Activated naive CD4-positive, alpha-beta T cell treated with anti-CD3 and anti-CD28 coated beads for 36 hours (primary cell): ENCODE measurements at regions of chr7 and their contacts with region 1.

Region 1: GRCh38 chr7:135281363-135281949 is 47.8 kb downstream of the STRA8 start:
- DNase-seq: peak; percentile 93
- H3K4me3 Mint-ChIP-seq: no peak overlapping the region
- H3K27ac Mint-ChIP-seq: no peak overlapping the region
- H3K4me1 Mint-ChIP-seq: peaks cover 6% of the 10 kb centered on the region
- H3K27me3 Mint-ChIP-seq: peaks cover 5% of the 10 kb centered on the region

Region 2: DNA sequence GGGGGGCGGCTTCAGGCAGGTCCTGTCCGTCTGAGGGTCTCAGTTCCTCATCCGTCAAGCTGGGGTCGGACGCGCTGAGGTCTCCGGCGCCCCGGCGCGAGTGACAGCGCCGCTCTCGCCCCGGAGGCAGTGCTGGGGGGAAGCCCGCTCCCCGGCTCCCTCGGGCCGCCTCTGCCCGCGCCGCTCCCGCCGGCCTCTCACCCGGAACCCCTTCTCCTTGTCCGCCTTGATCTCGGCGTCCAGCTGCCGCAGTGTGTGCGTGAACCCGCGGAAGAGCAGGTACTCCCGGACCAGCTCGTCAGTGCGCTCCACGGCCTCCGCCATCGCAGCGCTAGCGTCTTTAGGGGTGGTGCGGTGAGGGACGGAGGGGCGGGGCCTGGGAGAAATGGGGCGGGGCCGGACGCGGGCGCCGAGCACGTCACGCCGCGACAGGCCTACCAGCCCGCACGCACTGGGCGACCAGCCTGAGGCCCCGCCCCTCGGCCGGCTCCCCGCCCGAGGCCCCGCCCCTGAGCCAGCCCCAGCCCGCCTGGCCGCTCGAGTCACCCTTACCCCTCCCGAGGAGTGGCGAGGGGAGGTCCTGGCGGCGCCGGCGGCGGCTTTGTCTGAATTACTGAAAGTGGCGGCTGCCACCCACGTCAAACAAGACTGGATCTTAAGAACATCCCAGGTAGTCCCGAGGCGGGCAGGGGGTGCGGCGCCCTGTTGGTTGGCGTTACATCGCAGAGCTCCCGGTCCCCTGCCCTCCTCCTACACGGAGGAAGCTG is 70.1 kb before region 1 on chr7 and contains the start of gene WDR91:
- CTCF ChIA-PET with region 1: interaction called, 4 read pairs
- intact Hi-C with region 1: loop called (anchors 2 kb)
- DNase-seq: peak; percentile 96
- H3K4me3 Mint-ChIP-seq: peak within 1 kb of the TSS; percentile 98
- H3K27ac Mint-ChIP-seq: peak within 1 kb of the TSS; percentile 85
- H3K4me1 Mint-ChIP-seq: peaks cover 41% of the 10 kb centered on the region
- H3K27me3 Mint-ChIP-seq: no peaks in the 10 kb centered on the region
- total RNA-seq, gene WDR91: 10.6 to 11.1 TPM

Region 3: DNA sequence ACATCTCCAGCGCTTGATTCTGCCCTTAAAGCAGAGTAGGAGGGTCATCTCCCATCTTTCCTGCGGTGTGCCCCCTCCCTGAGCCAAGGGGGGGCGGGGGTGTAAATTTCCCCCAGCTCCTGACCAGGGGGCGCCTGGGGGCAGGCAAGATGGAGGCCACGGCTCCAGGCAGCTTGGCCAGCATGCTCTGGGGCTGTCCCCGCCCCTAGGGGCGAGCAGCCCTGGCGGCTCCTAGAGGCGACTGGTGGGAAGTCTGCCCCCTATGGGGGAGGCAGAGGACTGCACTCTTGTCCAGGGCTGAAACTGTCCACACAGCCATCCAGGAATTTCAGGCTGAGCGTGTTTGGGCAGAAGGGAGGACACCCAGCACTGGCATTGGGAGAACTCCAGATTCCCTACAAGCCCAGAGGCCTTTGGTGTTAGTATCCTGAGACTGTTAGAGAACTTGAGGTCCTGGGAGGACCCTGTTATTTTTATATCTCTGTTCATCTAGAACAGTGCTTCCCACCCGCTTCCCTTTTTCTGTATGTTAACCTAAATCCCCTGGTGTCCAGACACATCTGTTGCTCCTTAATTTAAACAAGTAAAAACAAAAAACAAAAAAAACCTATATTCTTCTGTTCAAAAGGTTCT is 43.2 kb before region 1 on chr7:
- CTCF ChIA-PET with region 1: no interaction called
- intact Hi-C with region 1: no loop called
- DNase-seq: no peak
- H3K4me3 Mint-ChIP-seq: no peak overlapping the region
- H3K27ac Mint-ChIP-seq: no peak overlapping the region
- H3K4me1 Mint-ChIP-seq: peaks cover 4% of the 10 kb centered on the region
- H3K27me3 Mint-ChIP-seq: no peaks in the 10 kb centered on the region

Region 4: DNA sequence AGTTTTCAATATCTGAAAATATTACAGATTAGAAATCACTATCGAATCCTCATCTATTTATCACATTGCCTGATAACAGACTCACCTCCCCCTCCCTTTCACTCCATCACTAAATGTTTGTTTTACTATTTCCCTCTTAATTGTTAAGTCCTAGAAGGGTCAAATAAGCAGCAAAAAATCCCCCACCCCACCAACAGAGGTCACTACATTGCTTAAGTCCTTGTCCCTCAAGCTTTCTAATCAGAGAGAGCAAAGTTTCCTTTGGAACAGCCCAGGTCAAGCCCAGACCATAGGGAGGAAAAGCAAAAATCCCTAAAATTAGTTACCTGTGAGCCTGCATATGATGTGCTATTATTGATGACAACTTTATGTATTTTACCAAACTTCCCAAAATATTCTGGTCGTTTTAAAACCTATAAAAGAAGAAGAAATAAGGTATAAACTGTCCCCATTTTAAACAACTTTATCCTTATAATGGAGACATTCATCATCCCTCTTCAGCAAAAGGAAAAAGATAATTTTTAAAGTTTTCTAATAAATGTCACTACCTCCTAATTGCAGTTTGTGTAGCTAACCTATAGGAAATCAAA is 133.5 kb after region 1 on chr7:
- CTCF ChIA-PET with region 1: interaction called, 5 read pairs
- intact Hi-C with region 1: loop called (anchors 5 kb)
- DNase-seq: peak; percentile 58
- H3K4me3 Mint-ChIP-seq: no peak overlapping the region
- H3K27ac Mint-ChIP-seq: no peak overlapping the region
- H3K4me1 Mint-ChIP-seq: peaks cover 6% of the 10 kb centered on the region
- H3K27me3 Mint-ChIP-seq: no peaks in the 10 kb centered on the region

Region 5: DNA sequence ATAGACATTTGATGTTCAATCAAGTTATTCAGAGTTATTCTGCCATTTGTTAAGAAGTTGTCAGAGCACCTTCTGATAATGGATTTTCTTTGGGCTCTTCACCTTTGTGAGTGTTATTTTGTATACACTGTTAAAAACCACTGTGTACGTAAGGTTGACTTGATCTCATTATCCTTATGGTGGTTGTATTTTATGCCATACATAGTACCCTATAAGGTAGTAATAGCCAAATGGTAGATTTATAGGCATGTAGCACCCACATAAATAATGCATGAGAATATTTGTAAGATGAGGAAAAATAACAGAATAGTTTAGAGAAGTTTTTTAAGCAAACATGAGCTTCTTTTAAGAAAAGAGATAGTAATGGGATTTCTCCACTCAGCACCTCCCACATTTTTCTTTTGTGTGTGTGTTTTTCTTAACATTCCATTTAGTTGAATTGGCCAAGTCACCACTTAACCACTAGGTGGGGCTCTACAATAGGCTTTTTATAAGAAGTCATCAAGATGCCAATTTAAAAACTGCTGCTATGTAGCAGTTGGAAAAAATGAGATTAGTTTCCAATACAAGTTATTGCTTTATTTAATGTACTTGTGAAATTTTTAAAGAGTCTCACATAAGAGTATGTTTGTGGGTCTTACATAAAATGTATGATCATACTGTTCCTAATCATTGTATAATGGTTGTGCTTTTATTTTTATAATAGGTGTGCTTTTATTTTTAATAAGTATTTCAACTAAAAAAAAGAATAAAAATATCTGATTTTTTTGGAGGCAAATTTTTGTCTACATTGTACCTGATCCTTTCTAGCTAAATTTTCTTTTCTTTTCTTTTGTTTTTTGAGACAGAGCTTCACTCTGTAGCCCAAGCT is 339.8 kb after region 1 on chr7:
- CTCF ChIA-PET with region 1: interaction called, 3 read pairs
- intact Hi-C with region 1: loop called (anchors 1 kb)
- DNase-seq: peak; percentile 45
- H3K4me3 Mint-ChIP-seq: no peak overlapping the region
- H3K27ac Mint-ChIP-seq: no peak overlapping the region
- H3K4me1 Mint-ChIP-seq: no peaks in the 10 kb centered on the region
- H3K27me3 Mint-ChIP-seq: no peaks in the 10 kb centered on the region

Region 6: GRCh38 chr7:135710417-135711138 is 429.1 kb after region 1 on chr7:
- CTCF ChIA-PET with region 1: no interaction called
- intact Hi-C with region 1: loop called (anchors 5 kb)
- DNase-seq: no peak
- H3K4me3 Mint-ChIP-seq: no peak overlapping the region
- H3K27ac Mint-ChIP-seq: no peak overlapping the region
- H3K4me1 Mint-ChIP-seq: no peaks in the 10 kb centered on the region
- H3K27me3 Mint-ChIP-seq: no peaks in the 10 kb centered on the region

Region 7: GRCh38 chr7:136009488-136010079 is 728.1 kb after region 1 on chr7:
- CTCF ChIA-PET with region 1: no interaction called
- intact Hi-C with region 1: loop called (anchors 1 kb)
- DNase-seq: no peak
- H3K4me3 Mint-ChIP-seq: no peak overlapping the region
- H3K27ac Mint-ChIP-seq: no peak overlapping the region
- H3K4me1 Mint-ChIP-seq: peaks cover 4% of the 10 kb centered on the region
- H3K27me3 Mint-ChIP-seq: peaks cover 10% of the 10 kb centered on the region